Activated CD4-positive, alpha-beta memory T cell treated with anti-CD3 and anti-CD28 coated beads for 36 hours (primary cell): ENCODE measurements at regions of chr6 and their contacts with region 1.

Region 1: DNA sequence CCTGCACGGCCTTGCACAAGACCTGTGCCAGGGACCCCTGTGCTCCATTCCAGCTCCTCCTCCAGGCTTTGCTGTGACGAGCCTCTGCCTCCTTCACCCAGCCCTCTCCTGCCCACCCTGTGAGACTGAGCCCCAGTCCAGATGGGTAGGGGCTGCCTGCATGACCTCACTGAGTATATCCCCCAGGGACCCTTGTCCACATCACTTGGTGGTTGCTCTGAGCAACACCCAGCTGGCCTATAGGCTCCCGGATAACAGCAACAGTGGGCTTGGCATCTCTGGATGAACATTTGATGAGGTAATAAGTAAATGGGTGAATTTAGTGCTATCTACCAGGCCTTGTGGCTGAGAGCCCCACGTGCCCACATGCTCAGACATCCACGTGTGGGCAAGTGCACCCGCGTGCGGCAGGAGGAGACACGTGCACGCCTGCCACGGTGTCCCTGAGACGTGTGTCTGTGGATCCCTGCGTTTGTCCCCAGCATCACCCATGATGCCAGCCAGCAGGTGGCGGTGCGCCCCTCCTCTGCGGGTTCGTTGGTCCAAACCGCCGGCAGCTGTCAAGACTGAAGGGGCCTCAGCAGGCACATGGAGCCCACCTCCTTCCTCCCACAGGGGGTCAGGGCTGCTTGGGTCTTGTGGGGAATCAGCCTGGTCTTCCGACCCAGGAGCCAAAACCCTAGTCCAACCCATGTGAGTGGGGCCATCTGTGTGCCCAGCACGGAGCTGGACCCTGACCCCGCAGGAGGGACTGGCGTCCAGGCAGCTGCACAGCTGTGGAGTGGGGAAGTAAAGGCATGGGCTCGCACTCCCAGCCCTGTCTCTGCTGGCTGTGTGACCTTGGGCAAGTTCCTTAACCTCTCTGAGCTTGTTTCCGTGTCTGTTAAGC is 45.9 kb downstream of the FGD2 start:
- DNase-seq: peak; percentile 95
- H3K4me3 Mint-ChIP-seq: peak overlapping the region; percentile 53
- H3K27ac Mint-ChIP-seq: peak overlapping the region; percentile 98
- H3K4me1 Mint-ChIP-seq: peaks cover 55% of the 10 kb centered on the region
- H3K27me3 Mint-ChIP-seq: no peaks in the 10 kb centered on the region

Region 2: DNA sequence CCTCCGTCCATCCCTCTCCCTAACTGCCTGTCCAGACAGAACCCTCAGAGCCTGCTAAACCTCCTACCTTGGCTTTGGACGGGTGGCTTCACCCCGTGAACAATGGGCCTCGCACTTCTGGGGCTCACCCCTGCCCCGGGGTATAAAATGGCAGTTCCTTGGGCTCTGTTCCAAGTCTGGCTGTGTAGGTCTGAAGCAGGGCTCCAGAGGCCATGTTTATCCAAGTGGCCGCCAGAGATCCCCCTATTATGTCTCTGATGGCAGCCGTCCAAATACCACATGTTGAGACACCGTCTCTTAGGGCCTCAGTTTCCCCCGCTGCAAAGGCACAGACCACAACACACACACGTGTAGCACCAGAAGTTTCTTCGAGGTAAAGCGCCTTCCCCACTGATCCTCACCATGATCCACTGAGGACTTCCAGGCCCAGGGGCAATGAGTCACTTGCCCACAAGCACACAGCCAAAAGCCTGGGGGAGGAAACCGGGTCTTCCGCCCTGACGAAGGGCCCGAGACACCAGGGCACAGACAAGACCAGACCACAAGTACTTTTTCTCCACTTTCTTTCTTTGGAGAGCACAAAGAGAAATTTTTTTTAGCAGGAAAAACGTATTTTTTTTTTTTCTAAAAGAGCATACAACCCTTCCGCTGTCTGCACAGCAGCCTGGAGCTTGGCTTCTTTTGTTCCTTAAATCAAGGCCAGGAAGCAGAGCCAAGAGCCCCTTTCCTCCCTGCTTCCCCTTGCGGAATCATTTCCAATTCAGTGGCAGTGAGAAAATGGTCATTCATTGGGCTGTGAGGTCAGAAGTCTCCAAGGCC is 223.9 kb before region 1 on chr6:
- CTCF ChIA-PET with region 1: no interaction called
- POLR2A ChIA-PET with region 1: no interaction called
- intact Hi-C with region 1: no loop called
- DNase-seq: peak; percentile 48
- H3K4me3 Mint-ChIP-seq: no peak overlapping the region
- H3K27ac Mint-ChIP-seq: no peak overlapping the region
- H3K4me1 Mint-ChIP-seq: peaks cover 3% of the 10 kb centered on the region
- H3K27me3 Mint-ChIP-seq: peaks cover 10% of the 10 kb centered on the region

Region 3: GRCh38 chr6:36947570-36948351 is 103.6 kb before region 1 on chr6:
- CTCF ChIA-PET with region 1: no interaction called
- POLR2A ChIA-PET with region 1: no interaction called
- intact Hi-C with region 1: no loop called
- DNase-seq: peak; percentile 60
- H3K4me3 Mint-ChIP-seq: no peak overlapping the region
- H3K27ac Mint-ChIP-seq: no peak overlapping the region
- H3K4me1 Mint-ChIP-seq: peaks cover 34% of the 10 kb centered on the region
- H3K27me3 Mint-ChIP-seq: peaks cover 3% of the 10 kb centered on the region

Region 4: GRCh38 chr6:37029249-37029971 is 22.0 kb before region 1 on chr6:
- CTCF ChIA-PET with region 1: interaction called, 186 read pairs
- POLR2A ChIA-PET with region 1: interaction called, 29 read pairs
- intact Hi-C with region 1: loop called (anchors 1 kb)
- DNase-seq: peak; percentile 72
- H3K4me3 Mint-ChIP-seq: no peak overlapping the region
- H3K27ac Mint-ChIP-seq: peak overlapping the region; percentile 51
- H3K4me1 Mint-ChIP-seq: peaks cover 53% of the 10 kb centered on the region
- H3K27me3 Mint-ChIP-seq: no peaks in the 10 kb centered on the region

Region 5: GRCh38 chr6:37110500-37111461 is 59.4 kb after region 1 on chr6:
- CTCF ChIA-PET with region 1: interaction called, 12 read pairs
- POLR2A ChIA-PET with region 1: no interaction called
- intact Hi-C with region 1: loop called (anchors 1 kb)
- DNase-seq: peak; percentile 75
- H3K4me3 Mint-ChIP-seq: no peak overlapping the region
- H3K27ac Mint-ChIP-seq: peak overlapping the region; percentile 82
- H3K4me1 Mint-ChIP-seq: peaks cover 28% of the 10 kb centered on the region
- H3K27me3 Mint-ChIP-seq: no peaks in the 10 kb centered on the region

Region 6: DNA sequence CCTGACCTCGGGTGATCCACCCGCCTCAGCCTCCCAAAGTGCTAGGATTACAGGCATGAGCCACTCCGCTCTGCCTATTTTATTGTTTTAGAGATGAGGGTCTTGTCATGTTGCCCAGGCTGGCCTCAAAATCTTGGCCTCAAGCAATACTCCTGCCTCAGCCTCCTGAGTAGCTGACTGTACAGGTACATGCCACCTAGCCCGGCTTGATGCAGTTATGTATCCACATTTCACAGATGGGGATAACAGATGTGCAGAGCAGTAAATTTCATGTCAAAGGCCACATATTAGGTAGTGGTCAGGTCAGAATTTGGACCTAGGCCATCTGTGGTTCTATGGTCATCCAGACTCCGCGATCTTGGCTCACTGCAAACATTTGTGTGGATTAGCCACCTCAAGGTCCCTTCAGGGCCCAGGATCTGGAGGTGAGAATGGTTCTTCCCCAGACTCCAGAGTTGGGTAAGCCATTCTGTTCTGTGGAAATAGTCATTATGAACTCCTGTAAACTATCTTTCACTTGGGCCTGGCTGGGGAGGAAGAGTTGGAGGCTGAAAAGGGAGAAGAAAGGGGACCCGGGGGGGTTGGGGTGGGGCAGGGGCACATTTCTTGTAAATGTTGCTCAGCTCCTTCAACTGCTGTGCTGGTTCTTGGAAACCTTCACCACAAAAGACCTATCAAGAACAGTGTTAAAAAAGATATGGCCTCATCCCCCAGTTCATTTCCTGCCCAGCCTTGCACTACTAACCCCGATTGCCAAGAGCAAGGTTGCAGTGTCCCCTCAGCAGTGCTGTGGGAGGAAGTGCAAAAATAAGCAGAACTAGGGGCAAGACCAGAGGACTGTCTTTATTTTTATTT is 131.6 kb after region 1 on chr6:
- CTCF ChIA-PET with region 1: interaction called, 10 read pairs
- POLR2A ChIA-PET with region 1: interaction called, 166 read pairs
- intact Hi-C with region 1: loop called (anchors 1 kb)
- DNase-seq: peak; percentile 82
- H3K4me3 Mint-ChIP-seq: peak overlapping the region; percentile 48
- H3K27ac Mint-ChIP-seq: peak overlapping the region; percentile 96
- H3K4me1 Mint-ChIP-seq: peaks cover 55% of the 10 kb centered on the region
- H3K27me3 Mint-ChIP-seq: no peaks in the 10 kb centered on the region

Region 7: GRCh38 chr6:37499433-37500293 is 448.3 kb after region 1 on chr6 and contains the start of gene CCDC167:
- CTCF ChIA-PET with region 1: no interaction called
- POLR2A ChIA-PET with region 1: no interaction called
- intact Hi-C with region 1: loop called (anchors 10 kb)
- DNase-seq: peak; percentile 99
- H3K4me3 Mint-ChIP-seq: peak within 1 kb of the TSS; percentile 92
- H3K27ac Mint-ChIP-seq: peak within 1 kb of the TSS; percentile 95
- H3K4me1 Mint-ChIP-seq: peaks cover 86% of the 10 kb centered on the region
- H3K27me3 Mint-ChIP-seq: no peaks in the 10 kb centered on the region
- total RNA-seq, gene CCDC167: 60.4 to 65.2 TPM